WTC11 (cell line): ENCODE measurements at regions of chr6 and their contacts with region 1.

Region 1: GRCh38 chr6:43355862-43356590 is 13.4 kb downstream of the ZNF318 start:
- DNase-seq: peak; percentile 22
- ATAC-seq: peak; percentile 99
- H3K4me3 Mint-ChIP-seq: no peak overlapping the region
- H3K27ac Mint-ChIP-seq: peak overlapping the region; percentile 24
- H3K4me1 Mint-ChIP-seq: peaks cover 23% of the 10 kb centered on the region
- H3K27me3 Mint-ChIP-seq: no peaks in the 10 kb centered on the region
- CTCF ChIP-seq: no peak

Region 2: DNA sequence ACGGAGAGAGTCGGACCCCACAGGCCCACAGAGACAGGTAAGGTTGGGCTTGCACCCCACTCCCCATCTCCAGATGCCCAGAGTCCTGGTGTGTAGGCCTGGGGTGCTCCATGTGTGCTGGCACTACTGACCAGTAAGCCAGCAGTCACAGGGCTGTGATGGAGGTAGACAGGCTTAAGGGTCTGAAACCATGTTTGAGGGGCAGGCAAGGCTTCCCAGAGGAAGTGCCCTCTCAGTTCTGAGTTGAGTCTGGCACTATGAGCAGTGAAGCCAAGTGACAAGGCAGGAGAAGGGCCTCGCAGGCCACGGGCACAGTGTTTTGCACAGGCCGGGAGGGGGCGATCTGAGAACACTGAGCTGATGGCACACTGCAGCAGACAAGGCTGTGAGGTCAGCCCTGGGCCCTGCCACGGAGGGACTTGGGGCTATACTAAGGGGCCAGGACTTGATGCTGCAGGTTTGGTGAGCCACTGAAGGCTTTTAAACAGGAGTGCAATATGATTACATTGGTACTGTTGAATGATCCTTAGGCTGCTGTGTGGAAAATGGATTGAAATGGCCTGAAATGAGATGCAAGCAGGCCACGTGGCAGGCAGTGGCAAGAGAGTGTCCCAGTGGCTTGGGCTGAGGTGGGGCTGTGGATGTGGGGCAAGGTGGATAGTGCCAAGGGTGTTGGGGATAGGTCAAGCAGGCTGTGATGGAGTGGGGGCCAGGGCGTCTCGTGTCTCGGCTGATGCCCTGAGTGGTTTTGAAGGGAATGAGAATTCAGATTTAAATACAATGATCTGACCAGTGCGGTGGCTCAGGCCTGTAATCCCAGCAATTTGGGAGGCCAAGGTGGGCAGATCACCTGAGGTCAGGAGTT is 92.5 kb before region 1 on chr6:
- CTCF ChIA-PET with region 1: interaction called, 19 read pairs
- POLR2A ChIA-PET with region 1: no interaction called
- DNase-seq: peak; percentile 90
- ATAC-seq: peak; percentile 87
- H3K4me3 Mint-ChIP-seq: no peak overlapping the region
- H3K27ac Mint-ChIP-seq: peak overlapping the region; percentile 28; the same call in 1 of the 2 replicates
- H3K4me1 Mint-ChIP-seq: peaks cover 24% of the 10 kb centered on the region
- H3K27me3 Mint-ChIP-seq: peaks cover 14% of the 10 kb centered on the region
- CTCF ChIP-seq: peak; percentile 60; the same call in 1 of the 2 replicates

Region 3: GRCh38 chr6:43269273-43270007 is 86.6 kb before region 1 on chr6:
- CTCF ChIA-PET with region 1: interaction called, 10 read pairs
- POLR2A ChIA-PET with region 1: no interaction called
- DNase-seq: peak; percentile 50
- ATAC-seq: peak; percentile 43
- H3K4me3 Mint-ChIP-seq: peak overlapping the region; percentile 59
- H3K27ac Mint-ChIP-seq: no peak overlapping the region
- H3K4me1 Mint-ChIP-seq: peaks cover 38% of the 10 kb centered on the region
- H3K27me3 Mint-ChIP-seq: peaks cover 67% of the 10 kb centered on the region
- CTCF ChIP-seq: no peak

Region 4: GRCh38 chr6:43369174-43370022 is 13.4 kb after region 1 on chr6 and contains the start of gene ZNF318:
- CTCF ChIA-PET with region 1: interaction called, 12 read pairs
- POLR2A ChIA-PET with region 1: no interaction called
- DNase-seq: peak; percentile 95
- ATAC-seq: peak; percentile 97
- H3K4me3 Mint-ChIP-seq: peak within 1 kb of the TSS; percentile 80
- H3K27ac Mint-ChIP-seq: peak within 1 kb of the TSS; percentile 82; the same call in 1 of the 2 replicates
- H3K4me1 Mint-ChIP-seq: peaks cover 23% of the 10 kb centered on the region
- H3K27me3 Mint-ChIP-seq: peaks cover 22% of the 10 kb centered on the region
- CTCF ChIP-seq: no peak
- total RNA-seq, gene ZNF318: 19.0 to 24.3 TPM (median 19.7 TPM) in 3 replicates